ENCODE measurements at regions of chr13 and their contacts with region 1.

Region 1: DNA sequence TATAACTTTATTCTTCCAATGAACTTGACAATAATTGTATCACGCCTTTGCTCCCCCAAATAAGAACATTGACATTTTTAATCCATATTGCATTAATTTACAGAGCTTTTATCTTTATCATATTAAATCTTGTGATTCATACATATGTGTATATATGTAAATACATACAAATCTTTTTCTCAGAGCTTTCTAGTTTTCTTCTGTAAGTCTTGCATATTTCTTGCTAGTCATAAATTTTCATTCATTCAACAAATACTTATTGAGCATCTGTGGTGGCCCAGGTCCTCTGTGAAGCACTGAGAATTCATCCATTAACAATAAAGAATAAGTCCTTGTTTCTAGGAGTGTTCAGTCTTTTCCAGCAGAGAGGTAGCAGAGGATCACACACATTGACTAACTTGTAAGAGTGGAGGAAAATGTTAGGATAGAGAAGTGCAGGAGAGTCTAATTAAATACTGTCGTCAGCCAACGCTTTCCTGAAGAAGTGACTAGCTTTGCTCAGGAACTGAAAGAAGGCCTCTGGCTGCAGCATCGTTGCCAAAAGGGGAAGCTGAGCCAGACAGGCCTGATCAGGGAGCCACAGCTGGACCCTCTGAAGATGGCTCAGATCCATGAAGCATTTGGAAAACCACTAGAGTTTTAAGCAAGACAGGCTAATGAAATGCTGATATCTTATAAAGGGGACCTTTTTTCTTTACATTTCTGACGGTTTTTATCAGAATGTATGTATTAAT is 38.6 kb upstream of the LAMP1 start:
- DNase-seq: no peak
- ATAC-seq: no peak
- H3K4me3 ChIP-seq: no peak overlapping the region
- H3K27ac ChIP-seq: no peak overlapping the region
- H3K4me1 ChIP-seq: no peaks in the 10 kb centered on the region; the same call in 1 of the 2 replicates
- H3K27me3 ChIP-seq: no peaks in the 10 kb centered on the region
- CTCF ChIP-seq: no peak
- POLR2A ChIP-seq: no peak
- RAD21 ChIP-seq: no peak

Region 2: GRCh38 chr13:113140677-113141600 is 117.5 kb before region 1 on chr13:
- CTCF ChIA-PET with region 1: no interaction called
- POLR2A ChIA-PET with region 1: no interaction called
- dilution Hi-C with region 1: no loop called
- in situ Hi-C with region 1: no loop called
- intact Hi-C with region 1: no loop called
- DNase-seq: no peak
- ATAC-seq: no peak
- H3K4me3 ChIP-seq: no peak overlapping the region
- H3K27ac ChIP-seq: no peak overlapping the region
- H3K4me1 ChIP-seq: no peaks in the 10 kb centered on the region
- H3K27me3 ChIP-seq: peaks cover 4% of the 10 kb centered on the region; the same call in 1 of the 2 replicates
- CTCF ChIP-seq: no peak
- POLR2A ChIP-seq: no peak
- RAD21 ChIP-seq: no peak

Region 3: DNA sequence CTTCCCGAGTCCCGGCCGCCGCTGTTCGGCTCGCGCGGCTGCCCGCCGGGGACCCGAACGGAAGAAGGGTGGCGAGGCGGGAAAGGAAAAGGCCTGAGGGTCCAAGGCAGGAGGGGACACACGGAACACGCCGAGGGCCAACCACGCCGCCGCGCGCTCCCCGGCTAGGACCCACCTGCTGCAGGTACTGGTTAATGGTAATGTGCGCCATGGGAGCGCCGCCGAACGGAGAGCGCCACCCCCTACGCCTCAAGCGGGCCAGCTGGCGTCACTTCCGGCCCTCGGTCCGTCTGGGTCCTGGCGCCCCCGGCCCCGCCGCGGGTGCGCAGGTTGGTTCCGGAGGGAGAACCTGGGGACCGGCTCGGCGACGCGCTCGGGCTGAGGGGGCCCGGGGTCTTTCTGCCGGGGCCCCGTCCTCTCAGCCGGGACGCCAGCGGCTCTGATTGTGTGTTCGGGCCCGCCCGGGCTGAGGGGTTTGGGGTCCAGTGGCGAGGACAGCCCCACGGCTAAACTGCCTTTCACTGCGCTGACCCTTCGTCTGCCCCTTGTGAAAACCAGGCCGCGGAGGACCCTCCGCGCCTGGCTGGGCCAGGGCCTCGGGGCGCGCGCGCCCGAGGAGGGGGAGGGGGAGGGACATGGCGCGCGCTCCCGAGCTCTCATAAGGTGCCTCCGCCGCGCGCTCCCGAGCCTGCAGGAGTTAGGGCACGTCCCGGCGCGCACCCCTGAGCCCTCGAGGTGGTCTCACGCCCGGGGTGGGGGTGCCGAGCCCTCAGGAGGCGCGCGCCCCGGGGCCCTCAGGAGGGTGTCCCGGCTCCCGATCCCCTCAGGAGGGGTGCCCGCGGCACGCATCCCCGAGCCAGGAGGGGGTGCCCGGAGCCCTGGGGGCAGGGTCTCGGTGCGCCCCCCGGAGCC is 49.8 kb before region 1 on chr13 and contains the start of gene PCID2:
- CTCF ChIA-PET with region 1: no interaction called
- POLR2A ChIA-PET with region 1: no interaction called
- dilution Hi-C with region 1: no loop called
- in situ Hi-C with region 1: no loop called
- intact Hi-C with region 1: no loop called
- DNase-seq: peak; percentile 84
- ATAC-seq: peak; percentile 73
- H3K4me3 ChIP-seq: peak within 1 kb of the TSS; percentile 96
- H3K27ac ChIP-seq: peak within 1 kb of the TSS; percentile 99
- H3K4me1 ChIP-seq: peaks cover 21% of the 10 kb centered on the region
- H3K27me3 ChIP-seq: no peaks in the 10 kb centered on the region
- CTCF ChIP-seq: no peak
- POLR2A ChIP-seq: no peak; the same call in 1 of the 2 replicates
- RAD21 ChIP-seq: no peak
- total RNA-seq, gene PCID2: 72.8 and 90.9 TPM in 2 replicates

Region 4: DNA sequence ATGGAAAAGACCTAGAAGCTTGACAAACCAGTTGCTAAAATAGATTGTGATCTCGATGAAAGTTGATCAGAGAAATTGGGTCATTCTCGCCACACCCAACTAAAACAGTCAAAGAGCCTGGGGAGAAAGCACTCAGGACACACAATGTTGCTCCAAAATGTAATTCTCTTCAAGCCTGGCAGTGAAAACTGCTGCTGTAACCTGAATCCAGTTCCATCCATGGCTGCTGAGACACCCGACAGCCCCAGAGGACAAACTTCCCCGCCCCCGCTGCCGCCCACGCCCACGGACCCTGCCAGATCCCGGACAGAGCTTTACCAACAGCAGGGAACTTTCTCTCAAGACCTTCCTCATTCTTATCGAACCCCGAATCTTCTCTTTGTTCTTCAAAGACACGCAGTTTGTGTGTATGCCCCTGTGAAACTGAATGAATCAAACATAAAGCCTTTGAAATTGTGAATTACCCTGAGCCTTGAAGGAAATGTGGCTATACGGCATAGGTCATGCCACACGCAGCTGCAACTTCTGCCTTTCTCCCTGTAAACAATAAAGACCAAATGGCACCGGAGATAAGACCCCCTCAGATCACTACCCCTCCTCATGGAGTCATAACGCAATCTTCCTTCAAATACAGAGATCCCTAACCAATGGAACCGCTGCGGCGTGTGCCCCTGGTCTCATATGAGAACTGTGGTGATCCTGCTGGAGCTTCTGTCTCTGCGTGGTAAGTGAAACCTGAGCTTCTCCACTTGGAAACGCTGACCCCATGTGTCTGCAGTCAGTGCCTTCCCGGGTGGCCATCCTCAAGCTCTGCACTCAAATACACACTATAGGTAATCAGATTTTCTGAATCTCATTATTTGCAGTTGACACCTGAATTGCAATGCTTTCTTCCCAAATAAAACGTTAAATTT is 33.7 kb after region 1 on chr13:
- CTCF ChIA-PET with region 1: no interaction called
- POLR2A ChIA-PET with region 1: interaction called, 11 read pairs
- dilution Hi-C with region 1: no loop called
- in situ Hi-C with region 1: no loop called
- intact Hi-C with region 1: no loop called
- DNase-seq: peak; percentile 51
- ATAC-seq: peak; percentile 62
- H3K4me3 ChIP-seq: peak overlapping the region; percentile 46
- H3K27ac ChIP-seq: no peak overlapping the region
- H3K4me1 ChIP-seq: no peaks in the 10 kb centered on the region
- H3K27me3 ChIP-seq: peaks cover 17% of the 10 kb centered on the region
- CTCF ChIP-seq: no peak
- POLR2A ChIP-seq: no peak
- RAD21 ChIP-seq: peak; percentile 8; the same call in 1 of the 2 replicates